ENCODE measurements at regions of chr6 and their contacts with region 1.

Region 1: DNA sequence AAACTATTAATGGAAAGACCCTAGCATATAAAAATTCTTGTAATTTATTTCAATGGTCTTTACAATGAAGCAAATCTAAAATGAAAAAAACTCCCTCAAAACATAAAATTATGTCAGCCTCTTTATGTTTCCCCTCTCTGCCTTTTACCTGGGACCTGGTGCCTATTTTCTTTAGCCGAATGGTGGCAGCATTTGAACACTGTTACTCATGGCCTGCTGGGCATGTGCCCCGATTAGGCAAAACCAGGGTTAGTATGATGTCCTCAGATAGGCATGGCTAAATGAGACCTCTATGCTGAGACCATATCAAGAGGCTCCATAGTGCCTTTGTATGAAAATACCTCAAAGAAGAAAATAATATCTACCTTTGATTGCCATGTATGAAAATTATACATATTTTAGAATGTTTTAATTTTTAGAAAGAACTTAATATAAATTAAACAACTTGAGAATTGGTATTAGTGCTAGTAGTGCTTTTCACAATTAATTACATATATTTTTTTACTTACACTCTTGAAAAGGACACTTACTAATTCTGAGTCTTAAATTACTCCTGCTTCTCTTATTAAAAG is 22.5 kb upstream of the C6orf58 start:
- DNase-seq: peak in 3 of 9 donors; percentile 3 to 10 (median 4)
- ATAC-seq: no peak
- H3K4me3 ChIP-seq: no peak overlapping the region
- H3K4me3 Mint-ChIP-seq: peak overlapping the region in 1 of 10 donors; percentile 37
- H3K27ac ChIP-seq: no peak overlapping the region
- H3K27ac Mint-ChIP-seq: no peak overlapping the region
- H3K4me1 ChIP-seq: no peaks in the 10 kb centered on the region
- H3K4me1 Mint-ChIP-seq: no peaks in the 10 kb centered on the region
- H3K27me3 ChIP-seq: no peaks in the 10 kb centered on the region
- H3K27me3 Mint-ChIP-seq: peaks cover 17 to 41% (median 34%) of the 10 kb centered on the region in 5 donors

Region 2: DNA sequence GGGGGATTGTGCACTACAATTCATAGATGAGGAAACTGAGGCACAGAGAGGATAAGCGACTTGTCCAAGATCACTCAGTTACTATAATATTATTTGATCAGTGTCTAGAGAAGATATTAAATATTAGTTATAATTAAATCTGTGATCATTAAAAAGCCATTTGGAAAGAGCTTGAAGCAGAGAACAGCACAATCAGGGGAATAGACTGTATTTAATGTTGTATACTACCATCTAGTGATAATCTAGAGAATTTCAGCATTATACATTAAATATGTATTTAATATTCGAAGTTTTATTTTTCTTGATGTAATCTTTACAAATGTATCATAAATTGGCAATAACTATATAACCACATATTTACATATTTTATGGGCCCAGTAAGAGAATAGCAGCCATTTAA is 15.2 kb before region 1 on chr6:
- CTCF ChIA-PET with region 1: no interaction called
- POLR2A ChIA-PET with region 1: no interaction called
- intact Hi-C with region 1: no loop called
- DNase-seq: peak in 3 of 9 donors; percentile 18 to 30 (median 22)
- ATAC-seq: peak; percentile 65
- H3K4me3 ChIP-seq: no peak overlapping the region
- H3K4me3 Mint-ChIP-seq: no peak overlapping the region
- H3K27ac ChIP-seq: no peak overlapping the region
- H3K27ac Mint-ChIP-seq: no peak overlapping the region
- H3K4me1 ChIP-seq: no peaks in the 10 kb centered on the region
- H3K4me1 Mint-ChIP-seq: peaks cover 0 to 3% (median 0%) of the 10 kb centered on the region in 7 donors
- H3K27me3 ChIP-seq: no peaks in the 10 kb centered on the region
- H3K27me3 Mint-ChIP-seq: peaks cover 12 to 30% (median 18%) of the 10 kb centered on the region in 5 donors

Region 3: DNA sequence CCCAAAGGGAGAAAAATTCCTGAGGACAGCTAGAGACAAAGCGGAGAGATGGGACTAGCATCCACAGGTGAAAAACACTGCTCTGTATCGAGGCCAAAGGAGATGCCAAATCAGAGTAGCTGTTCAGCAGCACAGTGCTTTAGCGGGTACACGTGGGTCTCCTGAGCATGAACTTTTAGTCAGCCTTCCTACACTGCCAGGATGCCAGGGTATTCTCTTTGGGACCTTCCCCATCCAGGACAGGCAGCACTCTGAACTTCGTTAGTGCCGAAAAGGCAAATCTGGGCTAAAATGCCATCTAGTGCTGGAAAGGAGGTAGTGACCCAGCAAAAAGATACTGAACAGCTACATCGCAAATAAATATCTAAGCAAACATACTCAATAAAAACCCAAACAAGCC is 87.4 kb after region 1 on chr6:
- CTCF ChIA-PET with region 1: no interaction called
- POLR2A ChIA-PET with region 1: no interaction called
- intact Hi-C with region 1: loop called in 1 of 2 experiments (anchors 1 kb)
- DNase-seq: no peak
- ATAC-seq: no peak
- H3K4me3 ChIP-seq: no peak overlapping the region
- H3K4me3 Mint-ChIP-seq: no peak overlapping the region
- H3K27ac ChIP-seq: no peak overlapping the region
- H3K27ac Mint-ChIP-seq: no peak overlapping the region
- H3K4me1 ChIP-seq: no peaks in the 10 kb centered on the region
- H3K4me1 Mint-ChIP-seq: no peaks in the 10 kb centered on the region
- H3K27me3 ChIP-seq: no peaks in the 10 kb centered on the region
- H3K27me3 Mint-ChIP-seq: peaks cover 5 to 15% (median 7%) of the 10 kb centered on the region in 5 donors

Region 4: GRCh38 chr6:127869772-127870404 is 315.4 kb after region 1 on chr6:
- CTCF ChIA-PET with region 1: no interaction called
- POLR2A ChIA-PET with region 1: no interaction called
- intact Hi-C with region 1: no loop called
- DNase-seq: no peak
- ATAC-seq: no peak
- H3K4me3 ChIP-seq: no peak overlapping the region
- H3K4me3 Mint-ChIP-seq: peak overlapping the region in 9 of 10 donors; percentile 4 to 73 (median 52)
- H3K27ac ChIP-seq: no peak overlapping the region
- H3K27ac Mint-ChIP-seq: peak overlapping the region in 8 of 9 donors; percentile 10 to 89 (median 62)
- H3K4me1 ChIP-seq: peaks cover 12 to 24% of the 10 kb centered on the region in 2 donors
- H3K4me1 Mint-ChIP-seq: peaks cover 28 to 80% (median 60%) of the 10 kb centered on the region in 7 donors
- H3K27me3 ChIP-seq: no peaks in the 10 kb centered on the region
- H3K27me3 Mint-ChIP-seq: no peaks in the 10 kb centered on the region

Region 5: GRCh38 chr6:128731249-128732165 is 1177.0 kb after region 1 on chr6:
- CTCF ChIA-PET with region 1: no interaction called
- POLR2A ChIA-PET with region 1: no interaction called
- intact Hi-C with region 1: loop called (anchors 5 kb)
- DNase-seq: peak in 4 of 9 donors; percentile 4 to 14 (median 7)
- ATAC-seq: no peak
- H3K4me3 ChIP-seq: no peak overlapping the region
- H3K4me3 Mint-ChIP-seq: no peak overlapping the region
- H3K27ac ChIP-seq: no peak overlapping the region
- H3K27ac Mint-ChIP-seq: no peak overlapping the region
- H3K4me1 ChIP-seq: no peaks in the 10 kb centered on the region
- H3K4me1 Mint-ChIP-seq: no peaks in the 10 kb centered on the region
- H3K27me3 ChIP-seq: peaks cover 0 to 3% of the 10 kb centered on the region in 2 donors
- H3K27me3 Mint-ChIP-seq: peaks cover 0 to 24% (median 11%) of the 10 kb centered on the region in 5 donors

Region 6: GRCh38 chr6:129251669-129252376 is 1697.3 kb after region 1 on chr6:
- CTCF ChIA-PET with region 1: no interaction called
- POLR2A ChIA-PET with region 1: no interaction called
- intact Hi-C with region 1: loop called in 1 of 2 experiments (anchors 1 kb)
- DNase-seq: peak in 7 of 9 donors; percentile 1 to 35 (median 25)
- ATAC-seq: peak; percentile 59
- H3K4me3 ChIP-seq: no peak overlapping the region
- H3K4me3 Mint-ChIP-seq: no peak overlapping the region
- H3K27ac ChIP-seq: no peak overlapping the region
- H3K27ac Mint-ChIP-seq: no peak overlapping the region
- H3K4me1 ChIP-seq: no peaks in the 10 kb centered on the region
- H3K4me1 Mint-ChIP-seq: peaks cover 0 to 8% (median 0%) of the 10 kb centered on the region in 7 donors
- H3K27me3 ChIP-seq: no peaks in the 10 kb centered on the region
- H3K27me3 Mint-ChIP-seq: peaks cover 11 to 43% (median 29%) of the 10 kb centered on the region in 5 donors

Region 7: GRCh38 chr6:129370268-129370916 is 1815.9 kb after region 1 on chr6:
- CTCF ChIA-PET with region 1: no interaction called
- POLR2A ChIA-PET with region 1: no interaction called
- intact Hi-C with region 1: loop called in 1 of 2 experiments (anchors 1 kb)
- DNase-seq: peak in 7 of 9 donors; percentile 3 to 42 (median 29)
- ATAC-seq: peak; percentile 44
- H3K4me3 ChIP-seq: no peak overlapping the region
- H3K4me3 Mint-ChIP-seq: peak overlapping the region in 6 of 10 donors; percentile 13 to 65 (median 55)
- H3K27ac ChIP-seq: no peak overlapping the region
- H3K27ac Mint-ChIP-seq: no peak overlapping the region
- H3K4me1 ChIP-seq: peaks cover 0 to 5% of the 10 kb centered on the region in 2 donors
- H3K4me1 Mint-ChIP-seq: peaks cover 0 to 17% (median 9%) of the 10 kb centered on the region in 7 donors
- H3K27me3 ChIP-seq: no peaks in the 10 kb centered on the region
- H3K27me3 Mint-ChIP-seq: peaks cover 0 to 2% (median 0%) of the 10 kb centered on the region in 5 donors